Activated CD4-positive, alpha-beta T cell treated with anti-CD3 and anti-CD28 coated beads for 36 hours (primary cell): ENCODE measurements at regions of chr15 and their contacts with region 1.

Region 1: GRCh38 chr15:40044717-40045571 is 6.0 kb upstream of the SRP14 start:
- DNase-seq: peak; percentile 94
- ATAC-seq: peak; percentile 75
- H3K4me3 Mint-ChIP-seq: peak overlapping the region; percentile 46
- H3K27ac Mint-ChIP-seq: peak overlapping the region; percentile 47
- H3K4me1 Mint-ChIP-seq: peaks cover 76% of the 10 kb centered on the region
- H3K27me3 Mint-ChIP-seq: no peaks in the 10 kb centered on the region

Region 2: DNA sequence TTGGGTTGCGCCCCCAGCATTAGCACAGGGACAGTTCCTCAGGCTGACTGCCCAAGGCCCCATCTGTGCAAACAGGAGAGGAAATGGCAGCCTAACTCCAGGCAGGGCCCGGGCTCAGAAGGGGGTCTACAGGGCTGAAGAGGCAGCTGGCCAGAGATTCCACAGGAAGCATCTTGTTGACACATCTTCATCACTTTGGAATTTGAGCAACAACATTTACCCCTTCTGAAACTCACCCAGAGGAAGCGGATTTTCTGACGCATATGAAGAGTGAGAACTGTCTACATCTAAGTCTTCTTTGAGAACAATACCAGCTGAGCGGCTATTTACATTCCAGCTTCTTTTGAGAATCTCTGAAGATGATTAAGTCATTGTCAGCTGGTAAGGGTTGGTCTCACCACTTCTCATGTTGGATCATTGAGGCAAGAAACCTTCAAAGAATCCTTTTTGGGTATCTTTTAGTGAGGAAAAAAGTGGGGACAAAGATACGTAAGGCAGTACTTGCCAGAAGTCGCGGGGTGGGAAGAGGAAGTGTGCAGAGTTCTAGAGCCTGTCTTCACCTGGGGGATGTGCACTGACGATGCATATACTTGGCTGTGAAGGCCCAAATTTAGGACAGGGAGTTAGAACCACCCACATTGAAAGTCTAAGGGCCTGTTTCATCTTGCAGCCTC is 19.4 kb after region 1 on chr15:
- CTCF ChIA-PET with region 1: interaction called, 7 read pairs
- POLR2A ChIA-PET with region 1: interaction called, 4 read pairs
- intact Hi-C with region 1: loop called in 1 of 2 experiments (anchors 1 kb)
- DNase-seq: peak; percentile 46
- ATAC-seq: peak; percentile 73
- H3K4me3 Mint-ChIP-seq: no peak overlapping the region
- H3K27ac Mint-ChIP-seq: peak overlapping the region; percentile 66
- H3K4me1 Mint-ChIP-seq: peaks cover 22% of the 10 kb centered on the region
- H3K27me3 Mint-ChIP-seq: no peaks in the 10 kb centered on the region

Region 3: DNA sequence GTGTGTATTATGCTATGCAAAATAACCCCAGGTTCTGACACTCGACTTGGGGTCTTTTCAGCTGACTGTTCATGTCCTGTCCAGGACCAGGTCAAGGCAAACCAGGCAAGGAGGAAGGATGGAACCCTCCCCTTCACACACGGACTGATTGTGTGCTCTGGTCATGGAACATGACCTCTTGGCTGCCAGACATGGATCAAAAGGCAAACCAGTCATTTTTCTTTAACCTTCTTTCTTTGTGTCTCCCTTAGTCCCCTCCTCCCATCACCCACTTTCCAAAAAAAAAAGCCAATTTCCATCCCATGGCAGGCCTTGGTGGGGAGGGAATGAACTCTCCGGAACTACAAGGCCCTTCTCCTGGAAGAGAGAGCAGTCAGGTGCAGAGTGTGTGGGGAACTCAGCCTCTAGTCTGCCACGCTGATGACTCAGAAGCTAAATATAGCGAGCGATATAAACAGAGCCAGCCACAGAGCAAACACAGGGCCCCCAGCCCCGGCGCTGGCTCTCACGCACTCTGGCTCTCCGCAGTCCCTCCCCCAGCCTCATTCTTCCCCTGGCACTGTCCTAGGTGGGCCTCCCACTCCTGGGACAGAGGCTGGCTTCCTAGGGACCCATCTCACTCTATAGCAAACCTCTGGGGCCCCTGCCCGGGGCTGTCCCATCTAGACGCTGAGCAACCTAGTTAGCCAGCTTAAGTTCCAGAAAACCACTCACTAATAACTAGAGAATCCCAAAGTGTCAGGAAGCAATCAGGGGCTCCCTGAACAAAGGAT is 53.7 kb after region 1 on chr15:
- CTCF ChIA-PET with region 1: interaction called, 67 read pairs
- POLR2A ChIA-PET with region 1: interaction called, 5 read pairs
- intact Hi-C with region 1: no loop called
- DNase-seq: peak; percentile 87
- ATAC-seq: peak; percentile 94
- H3K4me3 Mint-ChIP-seq: peak overlapping the region; percentile 65
- H3K27ac Mint-ChIP-seq: peak overlapping the region; percentile 97
- H3K4me1 Mint-ChIP-seq: peaks cover 81% of the 10 kb centered on the region
- H3K27me3 Mint-ChIP-seq: no peaks in the 10 kb centered on the region

Region 4: DNA sequence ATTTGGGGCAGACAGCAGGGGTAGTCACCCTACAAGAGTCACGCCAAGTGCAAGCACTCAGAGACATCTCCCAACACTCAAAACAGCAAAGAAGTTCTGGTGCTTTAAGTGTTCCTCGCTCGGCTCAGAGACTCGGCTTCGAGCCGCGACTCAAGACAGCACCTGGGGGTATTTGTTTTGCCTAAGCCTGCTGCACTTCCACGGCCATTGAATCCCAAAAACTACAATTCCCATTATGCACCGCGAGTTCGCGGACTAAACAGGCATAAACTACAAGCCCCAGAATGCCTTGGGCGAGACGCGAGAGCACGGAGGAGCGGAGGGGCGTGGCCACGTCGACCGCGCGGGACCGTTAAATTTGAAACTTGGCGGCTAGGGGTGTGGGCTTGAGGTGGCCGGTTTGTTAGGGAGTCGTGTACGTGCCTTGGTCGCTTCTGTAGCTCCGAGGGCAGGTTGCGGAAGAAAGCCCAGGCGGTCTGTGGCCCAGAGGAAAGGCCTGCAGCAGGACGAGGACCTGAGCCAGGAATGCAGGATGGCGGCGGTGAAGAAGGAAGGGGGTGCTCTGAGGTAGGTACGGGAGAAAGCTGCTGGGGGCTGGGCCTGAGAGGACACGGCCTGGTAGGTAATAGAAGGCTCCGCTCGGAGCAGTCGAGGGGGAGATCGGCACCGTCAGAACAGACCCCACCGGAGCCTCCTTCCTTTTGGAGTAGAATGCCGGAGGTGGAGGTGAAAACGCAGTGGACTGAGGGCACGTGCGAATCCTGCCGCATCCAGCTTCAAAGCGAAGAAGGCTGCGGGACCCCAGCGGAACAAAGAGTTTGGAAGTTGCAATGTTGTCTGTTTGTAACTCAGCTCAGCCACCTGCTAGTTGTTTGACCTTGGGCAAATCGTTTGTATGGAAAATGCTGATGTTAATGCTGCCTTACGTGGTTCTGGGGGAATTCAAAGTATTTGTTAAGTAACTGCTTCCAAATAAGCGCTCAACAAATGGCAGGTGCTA is 116.0 kb after region 1 on chr15 and contains the start of gene BUB1B:
- CTCF ChIA-PET with region 1: interaction called, 34 read pairs
- POLR2A ChIA-PET with region 1: interaction called, 5 read pairs
- intact Hi-C with region 1: loop called (anchors 1 to 2 kb)
- DNase-seq: peak; percentile 96
- ATAC-seq: peak; percentile 95
- H3K4me3 Mint-ChIP-seq: no peak within 1 kb of the TSS
- H3K27ac Mint-ChIP-seq: no peak within 1 kb of the TSS
- H3K4me1 Mint-ChIP-seq: peaks cover 8% of the 10 kb centered on the region
- H3K27me3 Mint-ChIP-seq: no peaks in the 10 kb centered on the region
- total RNA-seq, gene BUB1B: 95.3 to 99.5 TPM

Region 5: GRCh38 chr15:40782580-40783227 is 737.8 kb after region 1 on chr15:
- CTCF ChIA-PET with region 1: no interaction called
- POLR2A ChIA-PET with region 1: no interaction called
- intact Hi-C with region 1: no loop called
- DNase-seq: peak; percentile 90
- ATAC-seq: peak; percentile 89
- H3K4me3 Mint-ChIP-seq: no peak overlapping the region
- H3K27ac Mint-ChIP-seq: no peak overlapping the region
- H3K4me1 Mint-ChIP-seq: peaks cover 15% of the 10 kb centered on the region
- H3K27me3 Mint-ChIP-seq: no peaks in the 10 kb centered on the region